ENCODE measurements at regions of chr1 and their contacts with region 1.

Region 1: GRCh38 chr1:63902844-63903589 is 129.2 kb downstream of the ROR1 start:
- DNase-seq: no peak
- ATAC-seq: peak in 2 of 4 donors; percentile 24 to 43
- H3K4me3 ChIP-seq: no peak overlapping the region
- H3K27ac ChIP-seq: no peak overlapping the region
- H3K4me1 ChIP-seq: peaks cover 0 to 35% (median 13%) of the 10 kb centered on the region in 12 donors
- H3K27me3 ChIP-seq: no peaks in the 10 kb centered on the region
- CTCF ChIP-seq: no peak
- POLR2A ChIP-seq: no peak

Region 2: GRCh38 chr1:63843884-63844283 is 59.1 kb before region 1 on chr1:
- intact Hi-C with region 1: no loop called
- DNase-seq: no peak
- ATAC-seq: no peak
- H3K4me3 ChIP-seq: no peak overlapping the region
- H3K27ac ChIP-seq: no peak overlapping the region
- H3K4me1 ChIP-seq: peaks cover 0 to 23% (median 4%) of the 10 kb centered on the region in 12 donors
- H3K27me3 ChIP-seq: no peaks in the 10 kb centered on the region
- CTCF ChIP-seq: no peak
- POLR2A ChIP-seq: no peak

Region 3: GRCh38 chr1:63859480-63860270 is 43.3 kb before region 1 on chr1:
- intact Hi-C with region 1: loop called in 1 of 10 experiments (anchors 10 kb)
- DNase-seq: peak in 1 of 5 donors; percentile 37
- ATAC-seq: peak; percentile 11 to 54 (median 28)
- H3K4me3 ChIP-seq: no peak overlapping the region
- H3K27ac ChIP-seq: peak overlapping the region in 4 of 12 donors; percentile 4 to 70 (median 39)
- H3K4me1 ChIP-seq: peaks cover 0 to 52% (median 14%) of the 10 kb centered on the region in 12 donors
- H3K27me3 ChIP-seq: no peaks in the 10 kb centered on the region
- CTCF ChIP-seq: no peak
- POLR2A ChIP-seq: no peak

Region 4: DNA sequence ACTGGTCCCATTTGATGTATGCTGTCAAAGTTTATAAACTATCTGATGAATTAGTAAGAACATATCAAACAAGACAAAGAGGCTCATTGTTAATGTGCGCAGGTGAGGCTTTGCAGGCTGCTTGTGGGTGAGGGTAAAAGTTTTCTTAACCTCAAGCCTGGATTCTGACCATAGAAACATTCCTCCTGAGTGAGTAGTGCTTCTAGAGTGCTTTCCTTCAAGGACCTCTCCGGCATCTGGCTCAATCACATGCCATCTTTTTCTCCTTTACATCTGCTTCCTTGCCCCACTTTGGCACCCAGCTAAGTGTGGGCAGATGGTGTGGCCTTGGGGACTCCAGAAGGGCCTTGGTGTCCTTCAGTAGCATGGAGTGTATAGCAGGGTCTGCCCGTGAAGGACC is 25.2 kb before region 1 on chr1:
- intact Hi-C with region 1: loop called in 1 of 10 experiments (anchors 5 kb)
- DNase-seq: no peak
- ATAC-seq: peak in 2 of 4 donors; percentile 31
- H3K4me3 ChIP-seq: no peak overlapping the region
- H3K27ac ChIP-seq: no peak overlapping the region
- H3K4me1 ChIP-seq: peaks cover 0 to 70% (median 39%) of the 10 kb centered on the region in 12 donors
- H3K27me3 ChIP-seq: no peaks in the 10 kb centered on the region
- CTCF ChIP-seq: no peak
- POLR2A ChIP-seq: no peak

Region 5: DNA sequence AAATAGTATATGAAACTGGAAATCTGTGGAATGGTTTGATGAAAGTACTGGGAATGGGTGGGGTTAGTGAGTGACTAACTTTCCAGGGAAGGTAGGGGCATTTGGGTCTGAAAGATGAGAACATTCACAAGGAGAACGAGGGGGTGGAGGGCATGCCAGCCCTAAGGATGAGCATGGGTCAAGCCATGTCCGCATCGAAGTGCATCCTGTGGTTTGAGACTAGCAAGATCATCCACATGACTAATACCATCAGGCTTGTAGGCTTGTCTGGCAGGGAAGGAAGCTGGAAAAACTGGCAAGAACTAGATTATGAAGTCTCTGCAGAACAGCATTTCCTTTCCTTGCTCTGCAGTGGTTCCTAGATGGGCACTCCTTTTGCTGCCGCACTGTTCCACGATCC is 230.0 kb after region 1 on chr1:
- intact Hi-C with region 1: no loop called
- DNase-seq: no peak
- ATAC-seq: peak in 1 of 4 donors; percentile 13
- H3K4me3 ChIP-seq: no peak overlapping the region
- H3K27ac ChIP-seq: no peak overlapping the region
- H3K4me1 ChIP-seq: peaks cover 0 to 27% (median 5%) of the 10 kb centered on the region in 12 donors
- H3K27me3 ChIP-seq: no peaks in the 10 kb centered on the region
- CTCF ChIP-seq: no peak
- POLR2A ChIP-seq: no peak